PC-3 (cell line): ENCODE measurements at regions of chr1 and their contacts with region 1.

Region 1: GRCh38 chr1:155208541-155209311 is at the start of gene MTX1:
- DNase-seq: peak; percentile 83
- ATAC-seq: peak; percentile 78
- H3K4me3 ChIP-seq: peak within 1 kb of the TSS; percentile 98
- H3K27ac ChIP-seq: peak within 1 kb of the TSS; percentile 90
- H3K4me1 ChIP-seq: peaks cover 26% of the 10 kb centered on the region
- H3K27me3 ChIP-seq: no peaks in the 10 kb centered on the region
- CTCF ChIP-seq: no peak
- total RNA-seq, gene MTX1: 141 and 152 TPM in 2 replicates

Region 2: DNA sequence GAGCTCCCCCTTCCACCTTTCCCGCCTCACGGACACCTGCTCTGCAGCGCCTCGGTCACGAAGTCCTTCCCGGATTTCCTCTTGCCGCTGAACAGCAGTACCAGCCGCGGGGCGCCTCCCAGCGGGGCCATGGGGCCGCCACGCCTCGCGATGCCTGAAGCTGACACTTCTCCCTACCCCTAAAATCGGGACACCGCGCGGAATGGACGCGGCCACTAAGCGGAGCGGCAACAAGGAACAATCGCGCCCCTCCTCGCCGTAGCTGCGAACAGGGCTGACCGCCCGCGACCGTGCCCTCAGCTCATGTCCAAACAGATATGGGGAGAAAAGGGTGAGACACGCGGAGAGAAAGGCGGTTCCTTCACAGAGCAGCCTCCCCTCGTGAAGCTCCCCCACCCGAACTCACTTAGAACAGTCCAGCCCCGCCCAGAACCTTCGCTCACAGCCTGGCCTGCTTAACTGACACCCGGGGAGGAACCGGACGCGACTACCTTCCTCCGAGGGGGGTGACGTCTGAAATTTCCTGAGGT is 272.1 kb before region 1 on chr1 and contains the start of gene PMVK:
- CTCF ChIA-PET with region 1: no interaction called
- POLR2A ChIA-PET with region 1: no interaction called
- intact Hi-C with region 1: no loop called
- DNase-seq: peak; percentile 94
- ATAC-seq: peak; percentile 72
- H3K4me3 ChIP-seq: peak within 1 kb of the TSS; percentile 67
- H3K27ac ChIP-seq: peak within 1 kb of the TSS; percentile 93
- H3K4me1 ChIP-seq: peaks cover 45% of the 10 kb centered on the region
- H3K27me3 ChIP-seq: no peaks in the 10 kb centered on the region
- CTCF ChIP-seq: peak; percentile 53
- total RNA-seq, gene PMVK: 32.3 and 41.5 TPM in 2 replicates

Region 3: GRCh38 chr1:155193275-155193990 is 15.3 kb before region 1 on chr1:
- CTCF ChIA-PET with region 1: interaction called, 12 read pairs
- POLR2A ChIA-PET with region 1: interaction called, 8 read pairs
- intact Hi-C with region 1: no loop called
- DNase-seq: peak; percentile 96
- ATAC-seq: peak; percentile 82
- H3K4me3 ChIP-seq: peak overlapping the region; percentile 70
- H3K27ac ChIP-seq: peak overlapping the region; percentile 75
- H3K4me1 ChIP-seq: peaks cover 27% of the 10 kb centered on the region
- H3K27me3 ChIP-seq: no peaks in the 10 kb centered on the region
- CTCF ChIP-seq: peak; percentile 99

Region 4: GRCh38 chr1:155227261-155228095 is 18.8 kb after region 1 on chr1:
- CTCF ChIA-PET with region 1: interaction called, 9 read pairs
- POLR2A ChIA-PET with region 1: interaction called, 5 read pairs
- intact Hi-C with region 1: loop called (anchors 1 kb)
- DNase-seq: peak; percentile 100
- ATAC-seq: peak; percentile 96
- H3K4me3 ChIP-seq: peak overlapping the region; percentile 76
- H3K27ac ChIP-seq: peak overlapping the region; percentile 55
- H3K4me1 ChIP-seq: peaks cover 45% of the 10 kb centered on the region
- H3K27me3 ChIP-seq: no peaks in the 10 kb centered on the region
- CTCF ChIP-seq: no peak

Region 5: DNA sequence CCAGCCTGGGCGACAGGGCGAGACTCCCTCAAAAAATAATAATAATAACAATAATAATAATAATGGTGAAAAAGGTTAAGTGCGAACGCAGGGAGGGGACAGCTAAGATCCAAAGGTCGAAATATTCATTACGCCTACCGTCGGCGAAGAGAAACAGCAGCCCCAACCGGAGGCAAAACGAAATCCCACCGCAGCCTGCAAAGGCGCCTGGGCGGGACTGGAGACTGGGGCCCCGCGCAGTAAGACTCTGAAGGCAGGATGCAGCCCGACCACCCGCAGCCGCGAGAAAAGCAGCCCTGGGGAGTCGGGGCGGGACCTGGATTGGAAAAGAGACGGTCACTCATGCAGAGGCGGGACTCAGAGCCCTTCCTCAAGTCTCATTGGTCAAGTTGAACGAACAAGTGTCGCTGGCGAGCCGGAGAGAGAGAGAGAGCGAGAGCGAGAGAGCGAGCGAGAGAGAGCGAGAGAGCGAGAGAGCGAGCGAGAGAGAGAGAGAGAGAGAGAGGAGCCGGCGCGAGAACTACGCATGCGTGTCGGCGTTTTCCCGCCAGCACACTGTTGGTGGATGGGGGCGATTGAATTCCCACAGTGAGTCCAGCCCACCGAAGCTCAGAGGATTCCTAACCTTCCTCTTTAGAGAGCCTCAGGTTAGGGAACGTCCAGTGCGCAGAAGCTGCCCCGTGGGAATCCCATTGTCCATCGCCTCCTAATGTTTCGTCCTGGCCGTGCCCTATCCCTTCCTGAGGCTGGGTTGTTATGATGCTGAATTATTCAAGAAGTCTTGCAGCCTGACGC is 35.8 kb after region 1 on chr1:
- CTCF ChIA-PET with region 1: interaction called, 4 read pairs
- POLR2A ChIA-PET with region 1: interaction called, 8 read pairs
- intact Hi-C with region 1: loop called (anchors 5 kb)
- DNase-seq: peak; percentile 99
- ATAC-seq: peak; percentile 91
- H3K4me3 ChIP-seq: peak overlapping the region; percentile 77
- H3K27ac ChIP-seq: peak overlapping the region; percentile 54
- H3K4me1 ChIP-seq: peaks cover 27% of the 10 kb centered on the region
- H3K27me3 ChIP-seq: no peaks in the 10 kb centered on the region
- CTCF ChIP-seq: peak; percentile 23

Region 6: DNA sequence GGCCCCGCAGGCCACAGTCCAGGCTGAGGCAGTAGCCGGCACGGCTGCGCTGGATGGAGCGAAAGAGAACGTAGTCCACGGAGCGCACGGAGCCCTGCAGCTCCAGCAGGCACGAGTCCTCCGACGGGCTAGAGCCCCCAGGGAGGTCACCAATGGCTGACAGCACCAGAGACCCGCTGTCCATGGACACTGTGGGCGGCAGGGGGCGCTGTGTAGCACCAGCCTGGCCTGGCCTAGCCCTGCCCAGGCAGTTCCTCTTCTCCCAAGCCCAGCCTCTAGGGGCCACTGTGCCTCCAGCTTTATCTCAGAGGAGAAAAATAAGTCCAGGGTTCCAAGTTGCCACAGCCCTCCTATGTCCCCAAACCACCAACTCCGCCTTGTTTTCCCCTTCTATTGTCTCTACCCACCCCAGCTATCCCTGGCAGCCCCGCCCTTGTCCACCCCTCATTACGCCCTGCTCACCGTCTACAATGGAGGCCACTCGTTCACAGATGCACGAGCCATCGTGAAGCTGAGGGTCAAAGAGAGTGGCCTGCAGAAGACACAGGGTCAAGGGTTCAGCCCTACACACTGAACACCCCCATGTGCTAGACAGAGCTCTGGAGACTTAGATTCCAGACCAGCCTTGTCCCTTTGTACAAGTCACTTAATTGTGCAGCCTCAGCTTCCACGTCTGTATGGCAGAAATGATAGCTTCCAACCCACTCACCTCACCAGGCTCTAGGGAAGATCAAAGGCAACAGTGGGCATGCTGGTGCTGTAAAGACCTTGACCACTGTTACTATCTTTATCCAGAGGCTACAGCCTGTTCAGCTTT is 42.1 kb after region 1 on chr1:
- CTCF ChIA-PET with region 1: no interaction called
- POLR2A ChIA-PET with region 1: no interaction called
- intact Hi-C with region 1: loop called (anchors 1 kb)
- DNase-seq: peak; percentile 97
- ATAC-seq: peak; percentile 66
- H3K4me3 ChIP-seq: no peak overlapping the region
- H3K27ac ChIP-seq: no peak overlapping the region
- H3K4me1 ChIP-seq: peaks cover 19% of the 10 kb centered on the region
- H3K27me3 ChIP-seq: no peaks in the 10 kb centered on the region
- CTCF ChIP-seq: peak; percentile 99

Region 7: GRCh38 chr1:155323798-155324610 is 115.3 kb after region 1 on chr1:
- CTCF ChIA-PET with region 1: no interaction called
- POLR2A ChIA-PET with region 1: no interaction called
- intact Hi-C with region 1: loop called (anchors 2 kb)
- DNase-seq: peak; percentile 98
- ATAC-seq: peak; percentile 63
- H3K4me3 ChIP-seq: peak overlapping the region; percentile 80
- H3K27ac ChIP-seq: peak overlapping the region; percentile 83
- H3K4me1 ChIP-seq: peaks cover 21% of the 10 kb centered on the region
- H3K27me3 ChIP-seq: no peaks in the 10 kb centered on the region
- CTCF ChIP-seq: no peak